Activated naive CD4-positive, alpha-beta T cell treated with anti-CD3 and anti-CD28 coated beads, Interleukin-2, amount 10 ng/mL, durations not matched to agents 7 days and 5 days (primary cell): ENCODE measurements at regions of chr1 and their contacts with region 1.

Region 1: GRCh38 chr1:41432481-41433280 is 51.8 kb downstream of the EDN2 start:
- DNase-seq: peak; percentile 81
- H3K4me3 Mint-ChIP-seq: no peak overlapping the region
- H3K27ac Mint-ChIP-seq: no peak overlapping the region
- H3K4me1 Mint-ChIP-seq: no peaks in the 10 kb centered on the region
- H3K27me3 Mint-ChIP-seq: peaks cover 42% of the 10 kb centered on the region

Region 2: DNA sequence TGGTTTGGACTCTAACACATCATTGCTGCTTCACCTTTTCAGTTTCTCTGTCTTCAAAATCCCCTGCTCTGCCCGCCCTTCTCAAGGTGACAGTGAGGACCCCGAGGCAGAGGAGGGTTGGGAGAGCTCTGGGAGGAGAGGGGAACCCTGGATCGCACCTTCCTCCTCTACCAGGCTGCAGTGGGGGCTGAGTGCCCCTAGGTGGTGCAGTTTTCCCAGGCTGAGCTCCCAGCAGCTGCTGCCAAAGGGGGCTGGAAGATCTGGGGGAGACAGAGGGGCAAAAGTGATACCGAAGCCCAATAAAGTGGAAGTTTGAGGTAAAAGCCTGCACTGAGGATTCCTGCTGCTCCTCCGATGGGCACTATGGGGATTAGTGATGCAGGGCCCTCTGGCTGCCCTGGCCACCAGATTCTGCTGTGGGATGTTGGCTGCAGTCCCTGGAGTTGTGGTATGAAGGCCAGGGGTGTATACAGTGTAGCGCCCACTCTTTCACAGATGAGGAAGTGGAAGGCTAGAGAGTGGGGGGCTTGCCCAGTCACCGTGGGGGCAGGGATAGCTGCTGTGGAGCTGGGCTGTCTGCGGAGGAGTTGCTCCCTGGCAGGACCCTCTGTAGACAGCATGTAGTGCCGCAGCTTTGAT is 149.9 kb before region 1 on chr1:
- CTCF ChIA-PET with region 1: interaction called, 11 read pairs
- DNase-seq: peak; percentile 38
- H3K4me3 Mint-ChIP-seq: no peak overlapping the region
- H3K27ac Mint-ChIP-seq: no peak overlapping the region
- H3K4me1 Mint-ChIP-seq: no peaks in the 10 kb centered on the region
- H3K27me3 Mint-ChIP-seq: peaks cover 68% of the 10 kb centered on the region

Region 3: DNA sequence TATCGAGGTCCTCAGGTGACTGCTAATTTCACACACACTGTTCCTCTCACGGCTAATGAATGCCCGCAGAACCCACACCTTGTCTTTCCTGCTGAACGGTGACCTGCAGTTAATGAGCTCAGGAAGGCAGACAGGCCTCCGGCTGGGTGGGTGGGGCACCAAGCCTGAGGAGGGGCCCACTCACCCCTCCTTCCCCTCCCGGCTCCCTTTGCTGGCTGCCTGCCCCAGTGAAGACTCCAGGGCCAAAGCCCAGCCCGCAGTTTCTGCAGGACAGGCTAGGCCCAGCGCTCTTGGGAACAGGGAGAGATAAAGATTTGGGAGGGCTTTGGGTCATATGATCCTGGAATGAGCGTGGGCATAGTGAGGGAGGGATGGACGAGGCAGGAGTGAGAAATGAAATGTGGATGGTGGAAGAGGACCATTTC is 45.0 kb before region 1 on chr1:
- CTCF ChIA-PET with region 1: no interaction called
- DNase-seq: no peak
- H3K4me3 Mint-ChIP-seq: no peak overlapping the region
- H3K27ac Mint-ChIP-seq: no peak overlapping the region
- H3K4me1 Mint-ChIP-seq: peaks cover 7% of the 10 kb centered on the region
- H3K27me3 Mint-ChIP-seq: peaks cover 62% of the 10 kb centered on the region

Region 4: DNA sequence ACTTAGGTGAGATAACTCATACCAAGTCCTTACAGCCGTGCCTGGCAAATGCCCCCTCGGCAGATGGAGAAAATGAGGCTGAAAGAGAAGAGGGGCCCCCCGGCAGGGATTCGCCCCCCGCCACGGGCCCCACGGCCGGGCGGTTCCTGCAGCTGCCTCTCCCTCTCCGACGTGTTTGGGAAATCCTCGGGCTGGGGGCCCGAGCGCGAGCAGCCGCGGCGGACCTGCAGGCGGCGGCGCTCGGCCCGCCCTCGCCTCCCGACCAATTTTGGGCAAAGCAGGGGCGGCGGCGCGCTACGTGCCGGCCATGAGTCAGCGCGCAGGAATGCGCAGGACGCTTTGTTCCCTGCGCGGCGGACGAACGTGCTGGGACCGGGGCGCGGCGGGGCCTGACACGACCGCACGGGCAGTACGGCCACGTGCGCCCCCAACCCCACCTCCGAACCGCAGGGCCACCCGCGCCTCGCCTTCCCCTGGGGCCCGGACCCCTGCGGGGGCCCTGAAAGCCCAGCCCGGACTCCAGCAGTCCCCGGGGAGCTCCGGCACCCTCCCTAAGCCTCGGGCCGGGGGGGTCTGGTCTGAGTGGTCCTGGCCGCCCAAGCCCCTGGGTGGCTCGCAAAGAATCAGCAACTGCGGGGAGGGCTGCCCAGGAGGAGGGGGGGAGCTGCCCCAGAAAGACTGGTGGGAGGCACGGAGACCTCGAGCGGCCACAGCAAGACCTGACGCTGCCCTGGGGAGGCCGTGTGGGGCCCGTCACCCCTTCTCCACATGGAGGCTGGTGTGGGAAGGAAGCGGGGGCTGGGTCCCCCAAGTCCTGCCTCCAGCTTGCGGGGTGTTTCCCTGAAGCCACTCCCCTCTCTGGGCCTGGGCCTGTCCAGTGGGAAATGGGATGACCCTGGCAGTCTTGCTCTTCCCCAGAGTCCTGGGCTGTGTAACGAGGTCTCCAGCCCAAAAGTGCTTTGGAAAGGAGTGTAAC is 63.7 kb after region 1 on chr1:
- CTCF ChIA-PET with region 1: no interaction called
- DNase-seq: peak; percentile 48
- H3K4me3 Mint-ChIP-seq: peak overlapping the region; percentile 46
- H3K27ac Mint-ChIP-seq: no peak overlapping the region
- H3K4me1 Mint-ChIP-seq: peaks cover 7% of the 10 kb centered on the region
- H3K27me3 Mint-ChIP-seq: peaks cover 50% of the 10 kb centered on the region